ENCODE measurements at regions of chrX and their contacts with region 1.

Region 1: GRCh38 chrX:78517124-78517523 is 142.0 kb downstream of the RTL3 start:
- DNase-seq: peak; percentile 40
- ATAC-seq: peak; percentile 92
- H3K4me3 ChIP-seq: no peak overlapping the region
- H3K27ac ChIP-seq: peak overlapping the region; percentile 31; the same call in 1 of the 2 replicates
- H3K4me1 ChIP-seq: peaks cover 6% of the 10 kb centered on the region; the same call in 1 of the 2 replicates
- H3K27me3 ChIP-seq: no peaks in the 10 kb centered on the region
- CTCF ChIP-seq: no peak
- EP300 ChIP-seq: peak; percentile 65 to 75; a peak in 3 of 4 replicates
- POLR2A ChIP-seq: no peak
- RAD21 ChIP-seq: no peak

Region 2: DNA sequence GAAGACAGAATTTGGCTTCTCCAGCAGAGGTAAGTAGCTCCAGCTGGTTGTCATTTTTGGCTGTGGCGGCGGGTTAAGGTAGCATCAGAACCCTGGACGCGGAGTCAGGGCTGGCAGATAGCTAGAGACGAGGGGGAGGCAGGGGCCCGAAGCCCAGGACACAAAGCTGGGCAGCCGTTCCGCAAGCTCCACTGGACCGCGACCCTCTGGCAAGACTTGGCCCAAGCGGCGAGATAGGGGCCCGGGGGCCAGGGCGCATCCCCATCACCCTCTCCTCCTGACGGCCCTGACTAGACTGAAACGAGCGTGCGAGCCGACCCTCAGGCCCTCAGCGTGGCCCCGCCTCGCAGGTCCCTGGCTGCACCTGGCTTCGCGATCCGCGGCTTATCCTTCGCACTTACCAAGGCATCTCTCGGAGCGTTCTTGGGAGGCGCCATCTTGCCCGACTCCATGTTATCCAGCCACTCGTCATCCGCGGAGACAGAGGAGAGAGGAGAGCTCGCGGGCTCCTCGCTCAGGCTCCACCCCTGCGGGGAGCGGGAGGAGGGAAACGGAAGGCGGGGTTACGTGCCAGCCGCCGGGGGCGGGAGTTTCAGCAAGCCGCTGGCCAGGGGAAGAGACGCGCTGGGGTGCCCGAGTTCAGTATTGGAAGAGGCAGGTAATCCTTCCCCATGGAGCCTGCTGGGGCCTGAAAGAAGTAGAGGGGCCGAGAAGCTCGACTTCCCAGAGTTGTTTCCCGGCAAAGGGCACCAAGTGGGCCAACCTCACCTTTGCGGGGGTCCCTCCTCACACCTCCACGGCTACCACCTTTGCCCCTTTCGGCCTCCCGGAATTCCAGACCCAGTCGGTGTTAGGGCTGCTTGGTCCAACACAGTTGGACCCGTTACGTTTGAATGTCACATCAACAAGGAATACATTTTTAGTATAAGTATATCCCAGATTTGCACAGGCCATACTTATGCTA is 377.7 kb before region 1 on chrX and contains the start of gene TAF9B:
- CTCF ChIA-PET with region 1: no interaction called
- POLR2A ChIA-PET with region 1: no interaction called
- RAD21 ChIA-PET with region 1: interaction called, 3 read pairs
- SMC1A ChIA-PET with region 1: no interaction called
- in situ Hi-C with region 1: no loop called
- intact Hi-C with region 1: loop called (anchors 10 kb)
- DNase-seq: peak; percentile 51
- ATAC-seq: peak; percentile 98
- H3K4me3 ChIP-seq: peak within 1 kb of the TSS; percentile 64
- H3K27ac ChIP-seq: peak within 1 kb of the TSS; percentile 51
- H3K4me1 ChIP-seq: no peaks in the 10 kb centered on the region
- H3K27me3 ChIP-seq: no peaks in the 10 kb centered on the region
- CTCF ChIP-seq: no peak
- EP300 ChIP-seq: no peak
- POLR2A ChIP-seq: peak; percentile 86
- RAD21 ChIP-seq: no peak
- polyA plus RNA-seq, gene TAF9B: 19.0 to 20.8 TPM

Region 3: GRCh38 chrX:78333521-78333920 is 183.6 kb before region 1 on chrX:
- CTCF ChIA-PET with region 1: no interaction called
- POLR2A ChIA-PET with region 1: no interaction called
- RAD21 ChIA-PET with region 1: no interaction called
- SMC1A ChIA-PET with region 1: no interaction called
- in situ Hi-C with region 1: no loop called
- intact Hi-C with region 1: loop called (anchors 5 kb)
- DNase-seq: no peak
- ATAC-seq: peak; percentile 72
- H3K4me3 ChIP-seq: no peak overlapping the region
- H3K27ac ChIP-seq: 0 out of 2 replicates have a peak overlapping the region, but pooled peaks have one; percentile 8
- H3K4me1 ChIP-seq: peaks cover 13% of the 10 kb centered on the region
- H3K27me3 ChIP-seq: no peaks in the 10 kb centered on the region
- CTCF ChIP-seq: no peak
- EP300 ChIP-seq: no peak
- POLR2A ChIP-seq: no peak
- RAD21 ChIP-seq: no peak

Region 4: GRCh38 chrX:78964598-78964997 is 447.5 kb after region 1 on chrX:
- CTCF ChIA-PET with region 1: no interaction called
- POLR2A ChIA-PET with region 1: no interaction called
- RAD21 ChIA-PET with region 1: no interaction called
- SMC1A ChIA-PET with region 1: no interaction called
- in situ Hi-C with region 1: no loop called
- intact Hi-C with region 1: no loop called
- DNase-seq: no peak
- ATAC-seq: peak; percentile 61
- H3K4me3 ChIP-seq: no peak overlapping the region
- H3K27ac ChIP-seq: no peak overlapping the region
- H3K4me1 ChIP-seq: no peaks in the 10 kb centered on the region
- H3K27me3 ChIP-seq: no peaks in the 10 kb centered on the region
- CTCF ChIP-seq: no peak
- EP300 ChIP-seq: no peak
- POLR2A ChIP-seq: no peak
- RAD21 ChIP-seq: no peak